Activated CD8-positive, alpha-beta T cell treated with anti-CD3 and anti-CD28 coated beads, Interleukin-2, amount 10 ng/mL, durations not matched to agents 7 days and 5 days (primary cell): ENCODE measurements at regions of chr6 and their contacts with region 1.

Region 1: DNA sequence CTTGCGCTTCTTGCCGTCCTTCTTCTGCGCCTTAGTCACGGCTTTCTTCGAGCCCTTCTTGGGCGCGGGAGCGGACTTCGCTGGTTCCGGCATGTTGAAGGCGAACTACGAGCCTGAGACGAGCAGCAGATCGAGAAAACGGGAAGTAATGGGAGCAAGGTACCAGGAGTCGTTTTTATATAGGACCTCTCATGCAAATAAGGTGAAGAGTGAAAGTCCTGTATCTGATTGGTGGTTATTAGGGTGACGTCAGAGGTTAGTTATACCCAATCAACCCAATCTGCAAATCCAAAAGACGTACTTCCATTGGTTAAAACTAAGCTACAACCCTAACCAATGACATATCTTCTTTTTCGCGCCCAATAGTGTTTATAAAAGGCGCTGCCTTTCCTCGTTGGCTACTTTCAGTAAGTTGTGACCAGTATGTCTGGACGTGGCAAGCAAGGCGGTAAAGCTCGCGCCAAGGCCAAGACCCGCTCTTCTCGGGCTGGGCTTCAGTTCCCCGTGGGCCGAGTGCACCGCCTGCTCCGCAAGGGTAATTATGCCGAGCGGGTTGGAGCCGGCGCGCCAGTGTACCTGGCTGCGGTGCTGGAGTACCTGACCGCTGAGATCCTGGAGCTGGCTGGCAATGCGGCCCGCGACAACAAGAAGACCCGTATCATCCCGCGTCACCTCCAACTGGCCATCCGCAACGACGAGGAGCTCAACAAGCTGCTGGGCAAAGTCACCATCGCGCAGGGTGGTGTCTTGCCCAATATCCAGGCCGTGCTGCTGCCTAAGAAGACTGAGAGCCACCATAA is 100.6 kb upstream of the PRSS16 start:
- DNase-seq: peak; percentile 91
- ATAC-seq: peak; percentile 64
- H3K4me3 Mint-ChIP-seq: no peak overlapping the region
- H3K27ac Mint-ChIP-seq: no peak overlapping the region
- H3K4me1 Mint-ChIP-seq: peaks cover 35% of the 10 kb centered on the region
- H3K27me3 Mint-ChIP-seq: no peaks in the 10 kb centered on the region

Region 2: GRCh38 chr6:26025894-26026832 is 1120.7 kb before region 1 on chr6:
- CTCF ChIA-PET with region 1: no interaction called
- POLR2A ChIA-PET with region 1: interaction called, 43 read pairs
- DNase-seq: peak; percentile 97
- ATAC-seq: peak; percentile 42
- H3K4me3 Mint-ChIP-seq: peak overlapping the region; percentile 86
- H3K27ac Mint-ChIP-seq: peak overlapping the region; percentile 99
- H3K4me1 Mint-ChIP-seq: peaks cover 86% of the 10 kb centered on the region
- H3K27me3 Mint-ChIP-seq: peaks cover 3% of the 10 kb centered on the region

Region 3: DNA sequence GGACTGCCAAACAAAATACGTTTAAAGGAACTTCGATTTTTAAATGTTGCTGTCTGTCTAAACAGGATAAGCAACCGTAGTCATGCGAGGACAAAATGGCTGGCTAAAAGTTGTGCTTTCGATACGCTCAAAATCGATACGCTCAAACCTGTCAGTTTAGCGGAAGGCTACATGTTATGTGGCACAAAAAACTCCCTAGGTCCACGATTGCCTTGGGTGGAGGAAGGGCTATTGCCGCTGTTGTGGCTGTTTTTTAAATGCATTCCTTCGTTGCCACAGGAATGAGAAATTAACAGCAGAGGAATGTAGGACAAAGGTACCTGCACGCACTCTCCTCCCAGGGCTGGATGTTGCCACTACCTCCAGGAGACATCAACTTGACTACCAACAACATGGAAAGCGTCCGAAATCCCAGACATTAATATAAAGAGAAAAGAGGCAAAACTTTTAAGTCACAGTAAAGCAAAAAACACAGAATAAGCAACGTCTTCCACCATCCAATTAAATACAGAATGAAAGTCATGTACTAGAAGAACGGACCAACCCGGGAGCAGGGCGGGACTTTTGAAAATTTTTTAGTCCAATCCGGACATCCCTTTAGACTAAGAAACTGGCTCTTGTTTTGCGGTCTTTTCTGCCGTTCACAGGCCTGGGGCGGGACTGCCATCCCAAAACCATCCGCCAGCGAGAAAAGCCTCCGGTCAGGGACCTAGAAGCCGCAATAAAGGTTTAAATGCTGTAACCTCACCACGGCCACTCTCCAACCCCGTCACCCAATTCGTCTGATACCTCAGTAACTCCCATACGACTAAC is 1091.8 kb before region 1 on chr6:
- CTCF ChIA-PET with region 1: no interaction called
- POLR2A ChIA-PET with region 1: interaction called, 10 read pairs
- DNase-seq: peak; percentile 95
- ATAC-seq: peak; percentile 72
- H3K4me3 Mint-ChIP-seq: peak overlapping the region; percentile 87
- H3K27ac Mint-ChIP-seq: peak overlapping the region; percentile 100
- H3K4me1 Mint-ChIP-seq: peaks cover 36% of the 10 kb centered on the region
- H3K27me3 Mint-ChIP-seq: no peaks in the 10 kb centered on the region

Region 4: DNA sequence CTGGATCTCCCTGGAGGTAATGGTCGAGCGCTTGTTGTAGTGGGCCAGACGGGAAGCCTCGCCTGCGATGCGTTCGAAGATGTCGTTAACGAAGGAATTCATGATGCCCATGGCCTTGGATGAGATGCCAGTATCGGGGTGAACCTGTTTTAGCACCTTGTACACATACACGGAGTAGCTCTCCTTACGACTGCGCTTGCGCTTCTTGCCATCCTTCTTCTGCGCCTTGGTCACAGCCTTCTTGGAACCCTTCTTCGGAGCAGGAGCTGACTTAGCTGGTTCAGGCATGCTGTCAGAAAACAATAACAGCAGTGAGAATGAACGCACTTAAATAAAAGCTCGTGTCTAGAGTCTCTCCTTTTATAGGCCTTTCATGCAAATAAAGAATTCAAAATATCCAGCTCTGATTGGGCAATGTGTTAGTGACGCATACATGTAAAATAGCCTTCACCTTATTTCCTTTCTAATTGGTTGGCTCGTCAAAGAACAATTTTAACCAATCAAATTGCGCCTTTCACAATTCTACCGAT is 930.5 kb before region 1 on chr6:
- CTCF ChIA-PET with region 1: no interaction called
- POLR2A ChIA-PET with region 1: interaction called, 26 read pairs
- DNase-seq: peak; percentile 93
- ATAC-seq: peak; percentile 67
- H3K4me3 Mint-ChIP-seq: no peak overlapping the region
- H3K27ac Mint-ChIP-seq: no peak overlapping the region
- H3K4me1 Mint-ChIP-seq: peaks cover 43% of the 10 kb centered on the region
- H3K27me3 Mint-ChIP-seq: no peaks in the 10 kb centered on the region

Region 5: GRCh38 chr6:27132532-27133280 is 14.2 kb before region 1 on chr6:
- CTCF ChIA-PET with region 1: interaction called, 28 read pairs
- POLR2A ChIA-PET with region 1: interaction called, 1,009 read pairs
- DNase-seq: peak; percentile 95
- ATAC-seq: peak; percentile 76
- H3K4me3 Mint-ChIP-seq: no peak overlapping the region
- H3K27ac Mint-ChIP-seq: no peak overlapping the region
- H3K4me1 Mint-ChIP-seq: peaks cover 68% of the 10 kb centered on the region
- H3K27me3 Mint-ChIP-seq: no peaks in the 10 kb centered on the region

Region 6: DNA sequence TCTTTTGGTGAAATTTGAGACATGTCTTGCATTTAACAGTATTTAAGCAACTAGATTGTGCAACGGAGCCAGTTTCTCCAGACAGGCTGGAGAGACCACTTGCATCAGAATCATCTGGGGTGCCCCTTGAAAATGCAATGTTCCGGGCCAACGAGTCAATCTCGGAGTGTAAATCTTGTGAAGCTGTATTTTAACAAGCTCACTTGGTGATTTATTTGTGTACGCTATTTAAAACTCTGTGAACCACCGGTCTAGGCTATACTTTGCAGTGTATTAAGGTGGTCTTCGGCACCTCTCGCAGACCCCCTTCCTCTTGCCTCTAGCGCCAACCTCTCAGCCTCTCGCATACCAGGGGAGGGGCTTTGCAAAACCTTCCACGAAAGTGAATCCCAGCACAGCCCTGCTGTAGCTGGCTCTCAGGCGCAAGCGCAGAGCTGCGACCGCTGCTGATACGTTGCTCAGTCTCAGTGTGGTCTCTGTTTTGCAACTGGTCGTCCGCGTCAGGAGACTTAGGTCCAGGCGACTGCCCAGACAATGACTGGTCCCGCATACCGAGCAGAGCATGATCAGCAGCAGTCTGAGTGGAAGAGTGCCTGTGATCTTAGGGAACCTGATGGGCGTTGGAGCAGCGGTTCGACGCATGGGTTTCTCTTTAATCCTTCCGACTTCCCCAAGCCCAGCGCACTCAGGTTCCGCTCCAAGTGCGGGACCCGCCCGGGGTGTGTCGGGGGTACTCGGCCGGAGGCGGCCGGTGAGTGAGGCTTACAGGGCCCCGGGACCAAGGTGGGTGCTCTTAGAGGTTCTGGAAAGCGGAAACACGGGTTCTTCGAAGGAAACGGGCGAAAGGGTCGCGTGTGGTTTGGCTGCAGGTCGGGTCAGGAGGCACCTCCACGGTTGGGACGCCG is 241.6 kb after region 1 on chr6 and contains the start of gene ZNF391:
- CTCF ChIA-PET with region 1: no interaction called
- POLR2A ChIA-PET with region 1: no interaction called
- DNase-seq: peak; percentile 72
- ATAC-seq: peak; percentile 95
- H3K4me3 Mint-ChIP-seq: peak within 1 kb of the TSS; percentile 80
- H3K27ac Mint-ChIP-seq: peak within 1 kb of the TSS; percentile 90
- H3K4me1 Mint-ChIP-seq: peaks cover 15% of the 10 kb centered on the region
- H3K27me3 Mint-ChIP-seq: peaks cover 8% of the 10 kb centered on the region
- total RNA-seq, gene ZNF391: 1.1 to 1.9 TPM

Region 7: DNA sequence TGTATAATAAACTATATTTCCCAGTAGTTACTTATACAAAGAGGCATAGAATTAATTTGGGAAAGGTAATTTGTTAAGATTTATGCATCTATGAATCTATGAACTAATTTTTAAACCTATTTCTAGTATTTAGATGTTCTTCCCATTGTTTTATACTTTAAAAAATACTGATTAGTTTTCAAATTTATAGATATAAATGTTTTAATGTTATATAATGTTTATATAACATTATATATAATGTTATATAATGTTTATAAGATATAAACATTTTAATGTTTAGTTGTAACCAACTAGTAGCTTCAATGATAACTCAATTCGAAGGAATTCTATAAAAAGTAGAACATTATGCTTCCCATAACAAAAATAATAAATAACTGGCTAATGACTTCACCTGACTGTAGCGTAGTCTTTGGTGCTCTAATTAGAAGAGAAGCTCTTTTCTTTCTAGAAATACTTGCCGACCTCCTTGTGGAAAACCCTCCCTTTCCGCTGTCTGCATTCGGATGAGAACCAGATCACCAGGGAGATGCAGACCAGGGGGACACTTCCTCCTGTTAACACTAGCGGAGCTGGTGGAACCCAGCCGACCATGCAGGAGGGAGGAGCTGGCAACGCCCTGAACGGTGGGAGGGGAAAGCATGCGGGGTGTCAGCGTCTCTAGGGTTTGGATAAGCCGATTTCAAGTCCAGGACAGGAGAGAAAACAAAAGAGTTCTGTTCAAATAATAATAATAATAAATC is 606.9 kb after region 1 on chr6:
- CTCF ChIA-PET with region 1: interaction called, 4 read pairs
- POLR2A ChIA-PET with region 1: interaction called, 10 read pairs
- DNase-seq: peak; percentile 86
- ATAC-seq: peak; percentile 69
- H3K4me3 Mint-ChIP-seq: peak overlapping the region; percentile 90
- H3K27ac Mint-ChIP-seq: peak overlapping the region; percentile 76
- H3K4me1 Mint-ChIP-seq: peaks cover 41% of the 10 kb centered on the region
- H3K27me3 Mint-ChIP-seq: peaks cover 6% of the 10 kb centered on the region

Region 8: GRCh38 chr6:27825025-27825793 is 678.3 kb after region 1 on chr6:
- CTCF ChIA-PET with region 1: no interaction called
- POLR2A ChIA-PET with region 1: interaction called, 35 read pairs
- DNase-seq: no peak
- ATAC-seq: peak; percentile 3
- H3K4me3 Mint-ChIP-seq: peak overlapping the region; percentile 93
- H3K27ac Mint-ChIP-seq: peak overlapping the region; percentile 99
- H3K4me1 Mint-ChIP-seq: peaks cover 45% of the 10 kb centered on the region
- H3K27me3 Mint-ChIP-seq: no peaks in the 10 kb centered on the region

Region 9: DNA sequence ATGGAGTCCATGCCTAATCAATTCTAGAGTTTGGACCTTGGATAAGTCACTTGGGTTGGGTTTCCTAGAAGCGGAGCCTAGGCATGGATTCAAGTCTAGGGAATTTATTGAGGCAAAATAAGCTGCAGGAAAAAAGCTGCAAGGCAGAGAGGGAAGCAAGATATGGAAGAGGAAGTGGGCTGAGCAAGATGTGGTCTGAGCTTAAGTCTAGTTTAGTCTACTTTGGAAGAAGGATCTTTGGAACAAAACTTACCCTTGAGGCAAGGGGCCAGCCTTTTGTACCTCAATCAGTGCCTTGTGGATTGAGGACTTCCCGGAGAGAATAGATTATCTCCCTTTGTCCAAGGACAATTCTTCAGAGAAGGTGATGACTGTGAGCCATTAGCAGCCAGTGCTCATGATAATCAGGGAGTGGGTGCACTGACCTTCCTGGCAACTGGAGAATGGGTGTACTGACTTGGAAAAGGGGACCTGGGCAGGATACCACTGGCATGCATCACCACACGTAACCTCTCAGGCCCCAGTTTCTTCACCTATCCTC is 1089.1 kb after region 1 on chr6:
- CTCF ChIA-PET with region 1: no interaction called
- POLR2A ChIA-PET with region 1: no interaction called
- DNase-seq: no peak
- ATAC-seq: no peak
- H3K4me3 Mint-ChIP-seq: no peak overlapping the region
- H3K27ac Mint-ChIP-seq: no peak overlapping the region
- H3K4me1 Mint-ChIP-seq: peaks cover 4% of the 10 kb centered on the region
- H3K27me3 Mint-ChIP-seq: no peaks in the 10 kb centered on the region